BJ (cell line): ENCODE measurements at regions of chr5 and their contacts with region 1.

Region 1: GRCh38 chr5:148998174-148998797 is 64.6 kb downstream of the SH3TC2 start:
- DNase-seq: no peak
- H3K4me3 ChIP-seq: no peak overlapping the region
- H3K27me3 ChIP-seq: no peaks in the 10 kb centered on the region
- CTCF ChIP-seq: peak; percentile 61

Region 2: DNA sequence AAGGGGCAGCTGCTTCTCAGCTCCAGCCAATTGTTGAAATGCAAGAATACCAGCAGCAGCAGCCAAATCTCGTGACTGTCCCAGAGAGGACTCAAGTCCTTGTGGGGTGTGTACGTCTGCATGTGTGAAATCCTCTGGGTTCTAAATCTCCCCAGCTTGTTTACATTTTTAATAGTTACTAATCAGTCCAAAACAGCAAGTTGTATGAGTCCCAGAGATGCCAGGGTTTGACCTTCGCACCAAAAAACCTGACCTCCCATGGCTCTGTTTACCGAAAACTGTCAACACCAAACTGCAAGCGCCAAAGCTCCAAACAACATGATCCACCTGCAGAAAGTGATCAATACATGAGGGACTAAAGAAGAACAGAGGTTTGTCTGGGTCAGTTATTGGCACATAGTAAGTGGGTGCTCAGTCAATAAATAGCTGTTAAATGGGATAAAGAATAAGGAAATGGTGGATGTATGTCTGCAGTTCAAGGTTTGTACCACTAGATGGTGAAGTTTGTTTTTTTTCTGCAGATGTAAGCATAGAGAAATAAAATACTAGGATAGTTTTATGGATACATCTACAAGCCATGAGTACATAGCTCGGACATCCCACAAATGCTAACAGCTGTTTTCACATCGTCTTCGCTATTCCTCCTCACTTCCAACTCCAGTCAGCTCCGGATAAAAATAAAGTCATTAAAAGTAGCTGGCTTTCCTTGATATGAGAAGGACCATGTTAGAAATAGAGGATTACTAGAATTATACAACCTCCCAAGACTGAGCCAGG is 257.1 kb before region 1 on chr5:
- CTCF ChIA-PET with region 1: interaction called, 68 read pairs
- POLR2A ChIA-PET with region 1: no interaction called
- DNase-seq: peak; percentile 51
- H3K4me3 ChIP-seq: no peak overlapping the region
- H3K27me3 ChIP-seq: no peaks in the 10 kb centered on the region
- CTCF ChIP-seq: peak; percentile 64

Region 3: DNA sequence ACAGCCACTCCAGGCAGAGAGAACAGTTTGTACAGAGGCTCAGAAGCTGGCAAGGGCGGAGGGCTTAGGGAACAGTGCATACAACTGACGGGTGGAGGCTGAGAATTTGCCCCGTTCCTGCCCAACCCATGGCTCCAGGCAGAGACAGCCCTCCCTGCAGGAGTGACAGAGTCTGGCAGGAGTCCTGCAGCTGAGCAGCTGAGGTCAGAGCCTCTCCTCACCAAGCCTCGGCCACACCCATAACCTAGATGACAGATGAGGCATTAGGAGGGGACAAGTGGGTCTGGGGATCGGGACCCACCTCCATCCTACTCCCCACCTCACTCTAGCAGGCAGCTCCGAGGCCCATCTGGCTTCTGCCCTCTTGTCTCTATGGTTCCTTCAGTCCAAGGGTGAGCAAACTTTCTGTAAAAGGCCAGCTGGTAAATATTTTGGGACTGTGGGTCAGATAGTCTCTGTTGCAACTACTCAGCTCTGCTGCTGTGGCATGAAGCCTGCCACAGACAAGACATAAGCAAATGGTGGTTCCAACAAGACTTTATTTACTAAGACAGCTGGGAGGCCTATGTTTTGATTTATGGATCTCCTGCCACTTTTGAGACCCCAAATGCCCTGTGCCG is 19.1 kb before region 1 on chr5:
- CTCF ChIA-PET with region 1: interaction called, 16 read pairs
- POLR2A ChIA-PET with region 1: no interaction called
- DNase-seq: no peak
- H3K4me3 ChIP-seq: no peak overlapping the region
- H3K27me3 ChIP-seq: no peaks in the 10 kb centered on the region
- CTCF ChIP-seq: no peak

Region 4: DNA sequence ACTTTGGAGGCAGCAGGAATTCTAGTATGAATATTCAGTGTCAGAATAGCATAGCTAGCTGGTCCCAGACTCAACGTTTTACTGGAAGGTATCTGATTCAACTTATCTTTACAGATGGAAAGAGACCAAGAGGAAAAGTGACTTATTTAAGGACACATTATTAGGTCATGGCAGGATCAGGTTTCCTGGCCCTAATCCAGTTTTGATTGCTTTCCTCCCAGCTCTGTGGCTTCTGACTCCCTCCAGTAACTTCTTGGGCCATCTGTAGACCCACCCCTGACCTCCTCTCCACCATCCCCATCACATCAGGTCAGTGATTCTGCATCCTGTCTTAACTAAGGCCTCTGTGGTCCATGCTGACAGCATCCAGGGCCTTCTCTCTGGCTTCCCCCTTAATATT is 26.2 kb after region 1 on chr5:
- CTCF ChIA-PET with region 1: interaction called, 12 read pairs
- POLR2A ChIA-PET with region 1: no interaction called
- DNase-seq: no peak
- H3K4me3 ChIP-seq: no peak overlapping the region
- H3K27me3 ChIP-seq: no peaks in the 10 kb centered on the region
- CTCF ChIP-seq: no peak